ENCODE measurements at regions of chr12 and their contacts with region 1.

Region 1: GRCh38 chr12:54324617-54325441 is at the start of gene COPZ1:
- DNase-seq: peak; percentile 100
- H3K4me3 ChIP-seq: peak within 1 kb of the TSS; percentile 79
- H3K27ac ChIP-seq: peak within 1 kb of the TSS; percentile 83
- H3K4me1 ChIP-seq: peaks cover 6% of the 10 kb centered on the region
- H3K27me3 ChIP-seq: no peaks in the 10 kb centered on the region
- CTCF ChIP-seq: peak; percentile 89
- total RNA-seq, gene COPZ1: 169 and 187 TPM in 2 replicates

Region 2: DNA sequence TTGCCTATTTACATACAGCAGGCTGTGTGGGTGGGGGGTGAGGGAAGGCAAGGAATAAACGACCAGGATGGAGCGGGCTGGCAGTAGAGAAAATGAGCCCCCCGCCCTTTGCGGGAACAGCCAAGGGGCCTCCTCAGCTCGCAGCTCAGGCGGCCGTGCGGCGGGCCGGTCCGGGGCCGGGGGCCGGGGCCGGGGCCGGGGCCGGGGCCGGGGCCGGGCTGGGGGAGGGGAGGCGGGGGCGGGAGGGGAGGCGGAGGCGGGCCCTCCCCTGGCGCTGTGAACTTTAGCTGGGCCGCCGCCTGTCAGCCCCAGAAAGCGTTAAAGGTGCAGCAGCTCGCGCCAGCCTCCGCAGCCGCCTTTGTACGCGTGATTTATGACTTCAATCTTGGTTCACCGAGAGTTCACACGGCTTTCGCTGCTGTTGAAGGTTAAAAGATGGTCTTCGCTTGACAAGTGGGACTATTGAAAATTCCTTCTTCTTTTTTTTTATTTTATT is 242.4 kb before region 1 on chr12:
- CTCF ChIA-PET with region 1: interaction called, 14 read pairs
- POLR2A ChIA-PET with region 1: no interaction called
- intact Hi-C with region 1: no loop called
- DNase-seq: peak; percentile 45
- H3K4me3 ChIP-seq: peak overlapping the region; percentile 35
- H3K27ac ChIP-seq: no peak overlapping the region
- H3K4me1 ChIP-seq: peaks cover 6% of the 10 kb centered on the region
- H3K27me3 ChIP-seq: no peaks in the 10 kb centered on the region
- CTCF ChIP-seq: no peak

Region 3: GRCh38 chr12:54259194-54260011 is 65.4 kb before region 1 on chr12:
- CTCF ChIA-PET with region 1: interaction called, 5 read pairs
- POLR2A ChIA-PET with region 1: no interaction called
- intact Hi-C with region 1: loop called (anchors 2 kb)
- DNase-seq: peak; percentile 97
- H3K4me3 ChIP-seq: peak overlapping the region; percentile 50
- H3K27ac ChIP-seq: peak overlapping the region; percentile 87
- H3K4me1 ChIP-seq: peaks cover 59% of the 10 kb centered on the region
- H3K27me3 ChIP-seq: no peaks in the 10 kb centered on the region
- CTCF ChIP-seq: no peak

Region 4: DNA sequence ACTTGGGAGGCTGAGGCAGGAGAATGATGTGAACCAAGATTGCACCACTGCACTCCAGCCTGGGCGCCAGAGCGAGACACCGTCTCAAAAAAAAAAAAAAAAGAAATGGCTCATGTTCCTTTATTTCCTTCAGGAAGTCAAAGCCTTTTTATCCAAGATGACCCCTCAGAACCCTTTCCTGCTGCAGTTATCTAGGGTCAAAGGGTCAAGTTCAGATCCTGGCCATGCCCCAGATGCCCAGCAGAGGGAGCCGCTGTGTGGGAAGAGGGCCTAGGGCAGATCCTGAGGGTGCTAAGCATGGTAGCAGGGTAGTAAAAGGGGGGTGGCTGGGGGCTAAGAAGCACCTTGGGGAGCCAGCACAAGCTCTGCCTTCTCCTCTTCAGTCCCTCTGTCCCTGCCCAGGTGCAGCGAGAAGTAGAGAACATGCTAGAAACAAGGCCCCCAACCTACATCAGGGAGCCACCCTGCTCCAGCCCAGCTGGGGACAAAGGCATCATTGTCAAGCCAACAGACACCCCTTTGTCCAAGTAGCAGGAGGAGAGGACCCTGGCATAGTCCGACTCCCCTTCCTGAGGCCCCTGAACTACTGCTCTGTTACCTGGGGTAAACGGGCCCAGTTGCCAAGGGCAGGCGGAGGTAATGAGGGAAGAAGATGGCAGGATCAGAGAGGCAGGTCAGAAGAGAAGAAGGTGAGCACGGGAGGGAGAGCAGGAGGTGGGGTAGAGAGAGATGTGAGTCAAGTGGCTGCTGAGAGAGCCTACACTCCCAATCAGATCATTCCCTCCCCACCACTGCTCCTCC is 30.5 kb before region 1 on chr12:
- CTCF ChIA-PET with region 1: interaction called, 14 read pairs
- POLR2A ChIA-PET with region 1: interaction called, 3 read pairs
- intact Hi-C with region 1: no loop called
- DNase-seq: no peak
- H3K4me3 ChIP-seq: no peak overlapping the region
- H3K27ac ChIP-seq: no peak overlapping the region
- H3K4me1 ChIP-seq: no peaks in the 10 kb centered on the region
- H3K27me3 ChIP-seq: peaks cover under 1% of the 10 kb centered on the region
- CTCF ChIP-seq: peak; percentile 85

Region 5: GRCh38 chr12:54419088-54419892 is 94.5 kb after region 1 on chr12 and contains the start of gene ITGA5:
- CTCF ChIA-PET with region 1: no interaction called
- POLR2A ChIA-PET with region 1: no interaction called
- intact Hi-C with region 1: no loop called
- DNase-seq: peak; percentile 69
- H3K4me3 ChIP-seq: peak within 1 kb of the TSS; percentile 94
- H3K27ac ChIP-seq: peak within 1 kb of the TSS; percentile 90
- H3K4me1 ChIP-seq: peaks cover 44% of the 10 kb centered on the region
- H3K27me3 ChIP-seq: no peaks in the 10 kb centered on the region
- CTCF ChIP-seq: no peak
- total RNA-seq, gene ITGA5: 96.8 and 108 TPM in 2 replicates

Region 6: DNA sequence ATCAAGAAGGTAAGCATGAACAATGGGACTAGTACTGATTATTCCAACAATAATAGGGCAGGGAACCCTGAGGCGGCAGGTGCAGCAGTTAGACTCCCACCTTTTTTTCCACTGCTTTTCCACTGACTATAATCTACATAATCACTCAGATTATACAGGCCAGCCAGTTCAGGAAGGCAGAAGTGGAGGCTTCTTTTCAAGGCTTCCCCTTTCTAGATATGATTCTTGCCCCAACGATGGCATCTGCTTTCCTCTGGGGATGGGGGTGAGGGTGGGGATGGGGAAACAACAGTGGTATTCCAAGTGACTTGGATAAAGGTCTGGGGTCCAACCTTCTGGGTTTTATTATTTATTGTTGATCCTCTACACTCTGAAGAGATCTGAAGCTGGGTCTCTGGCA is 173.1 kb after region 1 on chr12:
- CTCF ChIA-PET with region 1: no interaction called
- POLR2A ChIA-PET with region 1: no interaction called
- intact Hi-C with region 1: no loop called
- DNase-seq: no peak
- H3K4me3 ChIP-seq: peak overlapping the region; percentile 57
- H3K27ac ChIP-seq: peak overlapping the region; percentile 78
- H3K4me1 ChIP-seq: peaks cover 28% of the 10 kb centered on the region
- H3K27me3 ChIP-seq: no peaks in the 10 kb centered on the region
- CTCF ChIP-seq: no peak

Region 7: GRCh38 chr12:54689984-54690383 is 365.2 kb after region 1 on chr12:
- CTCF ChIA-PET with region 1: no interaction called
- POLR2A ChIA-PET with region 1: no interaction called
- intact Hi-C with region 1: no loop called
- DNase-seq: peak; percentile 37
- H3K4me3 ChIP-seq: no peak overlapping the region
- H3K27ac ChIP-seq: no peak overlapping the region
- H3K4me1 ChIP-seq: no peaks in the 10 kb centered on the region
- H3K27me3 ChIP-seq: no peaks in the 10 kb centered on the region
- CTCF ChIP-seq: peak; percentile 51

Region 8: DNA sequence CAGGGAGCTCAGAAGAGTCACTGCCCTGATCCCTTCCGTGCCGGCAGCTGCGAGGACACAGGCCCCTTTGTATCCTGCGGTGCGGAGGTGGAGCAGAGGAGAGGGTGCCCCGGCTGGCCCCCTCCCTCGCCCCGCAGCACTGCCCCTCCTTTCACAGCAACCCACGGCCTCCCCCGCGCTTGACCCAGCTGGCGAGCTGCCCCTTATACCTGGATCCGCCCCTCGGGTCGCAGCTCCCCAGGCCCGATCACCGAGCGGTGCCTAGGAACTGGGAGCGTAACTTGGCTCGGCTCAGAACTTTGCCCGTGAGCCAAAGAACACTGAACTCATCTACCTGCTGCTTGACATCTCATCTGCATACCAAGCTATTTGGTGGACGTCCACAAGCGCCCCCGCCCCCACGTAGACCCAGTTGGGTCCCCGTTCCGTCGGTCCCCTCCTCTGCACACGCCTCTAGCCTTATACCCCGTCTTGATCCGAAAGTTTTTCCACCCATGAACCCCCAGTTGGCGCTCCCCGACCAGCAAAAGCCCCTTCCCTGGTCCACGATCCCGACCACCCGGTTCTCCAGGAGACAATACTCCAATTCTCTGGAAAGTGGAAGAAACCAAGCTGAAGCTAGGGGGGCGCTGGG is 1505.3 kb after region 1 on chr12:
- CTCF ChIA-PET with region 1: no interaction called
- POLR2A ChIA-PET with region 1: no interaction called
- intact Hi-C with region 1: no loop called
- DNase-seq: no peak
- H3K4me3 ChIP-seq: peak overlapping the region; percentile 99
- H3K27ac ChIP-seq: peak overlapping the region; percentile 95
- H3K4me1 ChIP-seq: peaks cover 2% of the 10 kb centered on the region
- H3K27me3 ChIP-seq: no peaks in the 10 kb centered on the region
- CTCF ChIP-seq: no peak

Measured in A673 (cell line).